ENCODE measurements at regions of chr5 and their contacts with region 1.

Region 1: DNA sequence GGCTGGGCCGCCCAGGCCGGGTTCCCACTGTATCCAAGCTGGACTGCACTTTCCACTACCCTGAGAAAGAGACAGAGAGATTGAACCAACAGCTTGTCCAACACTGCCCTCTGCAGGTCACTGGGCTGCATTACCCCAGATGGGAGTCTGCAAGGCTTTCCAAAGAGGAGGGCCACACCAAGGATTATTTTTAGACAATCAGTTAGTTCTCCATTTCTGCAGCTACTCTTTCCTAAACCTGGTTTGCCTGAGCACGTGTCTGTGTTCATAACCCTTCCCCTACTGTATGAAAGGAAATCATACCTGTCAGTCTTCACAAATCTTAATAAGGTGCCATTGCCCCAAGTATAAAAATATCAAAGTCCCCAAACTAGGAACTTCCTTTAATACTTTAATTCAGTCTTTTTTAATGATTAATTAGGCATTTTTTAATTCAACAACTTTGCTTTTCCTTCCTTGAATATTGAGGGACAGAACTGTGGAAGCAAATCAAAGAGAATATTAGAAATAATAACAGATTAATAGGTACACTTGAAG is 13.4 kb upstream of the FGF1 start:
- DNase-seq: peak; percentile 93
- H3K4me3 ChIP-seq: no peak overlapping the region
- H3K27ac ChIP-seq: peak overlapping the region in 3 of 4 donors; percentile 59 to 73 (median 72)
- H3K4me1 ChIP-seq: peaks cover 0 to 25% (median 19%) of the 10 kb centered on the region in 4 donors
- H3K27me3 ChIP-seq: no peaks in the 10 kb centered on the region
- CTCF ChIP-seq: peak; percentile 88 to 97 (median 92)
- EP300 ChIP-seq: no peak
- POLR2A ChIP-seq: no peak

Region 2: GRCh38 chr5:142151436-142152383 is 547.5 kb before region 1 on chr5:
- intact Hi-C with region 1: loop called (anchors 5 kb)
- DNase-seq: no peak
- H3K4me3 ChIP-seq: no peak overlapping the region
- H3K27ac ChIP-seq: no peak overlapping the region
- H3K4me1 ChIP-seq: peaks cover 0 to 4% (median 0%) of the 10 kb centered on the region in 4 donors
- H3K27me3 ChIP-seq: no peaks in the 10 kb centered on the region
- CTCF ChIP-seq: peak; percentile 46 to 78 (median 68)
- EP300 ChIP-seq: no peak
- POLR2A ChIP-seq: no peak

Region 3: DNA sequence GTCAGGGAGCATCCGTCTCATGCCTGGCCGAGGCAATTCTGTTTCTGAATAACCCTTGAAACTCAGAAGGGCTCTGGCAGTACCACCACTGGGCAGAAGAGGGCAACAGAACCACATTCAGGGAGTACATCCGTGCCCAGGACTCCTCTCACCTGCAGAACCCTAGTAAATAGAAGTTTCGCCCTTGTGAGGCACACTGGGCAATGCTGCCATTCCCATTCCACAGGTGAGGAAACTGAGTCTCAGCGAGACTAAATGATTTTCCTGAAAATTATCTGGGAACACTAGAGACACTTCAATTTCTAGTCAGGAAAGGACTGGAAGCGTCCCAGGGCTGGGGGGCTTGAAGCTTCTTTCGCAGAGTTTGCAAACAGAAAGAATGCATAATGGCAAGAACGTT is 88.1 kb before region 1 on chr5:
- intact Hi-C with region 1: loop called (anchors 1 kb)
- DNase-seq: peak; percentile 80
- H3K4me3 ChIP-seq: no peak overlapping the region
- H3K27ac ChIP-seq: no peak overlapping the region
- H3K4me1 ChIP-seq: peaks cover 0 to 12% (median 5%) of the 10 kb centered on the region in 4 donors
- H3K27me3 ChIP-seq: no peaks in the 10 kb centered on the region
- CTCF ChIP-seq: peak; percentile 84 to 93 (median 89)
- EP300 ChIP-seq: no peak
- POLR2A ChIP-seq: no peak

Region 4: DNA sequence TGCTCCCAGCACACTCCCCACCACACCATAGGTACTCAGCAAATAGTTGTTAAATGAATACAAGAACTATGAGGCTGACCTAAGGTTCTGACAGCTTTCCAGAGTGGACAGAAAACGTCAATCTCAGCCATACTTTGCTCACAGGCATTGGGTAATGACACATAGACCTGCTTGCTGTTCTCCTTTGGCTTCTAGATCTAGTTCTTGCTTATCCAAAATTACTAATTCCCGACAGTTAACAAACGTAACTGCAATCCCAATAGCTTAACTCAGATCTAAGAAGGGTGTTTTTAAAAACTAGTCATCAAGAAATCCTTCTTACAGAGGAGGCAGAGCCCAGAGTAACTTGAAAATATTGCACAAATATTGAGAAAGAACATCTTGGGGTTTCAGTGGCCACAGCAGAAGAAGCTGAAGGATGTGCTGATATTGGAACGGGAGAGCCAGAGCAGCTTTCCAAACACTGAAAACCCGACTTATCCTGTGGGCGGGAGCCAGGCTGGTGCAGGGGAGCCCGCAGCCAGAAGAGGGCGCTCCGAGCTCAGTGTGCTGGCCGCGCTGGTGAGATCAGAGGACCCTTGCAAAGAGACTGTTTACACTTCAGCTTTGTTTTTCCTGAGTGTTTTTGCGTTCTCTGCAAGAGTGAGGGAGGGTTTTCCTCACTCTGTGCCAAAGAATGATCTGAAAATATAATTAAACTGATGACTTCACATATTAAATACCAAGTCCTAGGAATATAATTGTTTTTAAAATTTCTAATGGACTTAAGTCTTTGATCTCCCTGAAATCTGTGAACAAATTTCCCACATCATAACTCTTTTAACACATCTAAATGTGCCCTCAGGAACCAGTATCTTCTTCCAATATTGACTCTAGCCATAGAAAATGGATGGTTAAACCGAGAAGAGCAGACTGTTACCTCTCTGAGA is 43.6 kb before region 1 on chr5:
- intact Hi-C with region 1: loop called (anchors 1 kb)
- DNase-seq: peak; percentile 94
- H3K4me3 ChIP-seq: no peak overlapping the region
- H3K27ac ChIP-seq: peak overlapping the region; percentile 3 to 53 (median 39)
- H3K4me1 ChIP-seq: peaks cover 0 to 13% (median 8%) of the 10 kb centered on the region in 4 donors
- H3K27me3 ChIP-seq: no peaks in the 10 kb centered on the region
- CTCF ChIP-seq: peak; percentile 74 to 99 (median 90)
- EP300 ChIP-seq: no peak
- POLR2A ChIP-seq: no peak

Region 5: DNA sequence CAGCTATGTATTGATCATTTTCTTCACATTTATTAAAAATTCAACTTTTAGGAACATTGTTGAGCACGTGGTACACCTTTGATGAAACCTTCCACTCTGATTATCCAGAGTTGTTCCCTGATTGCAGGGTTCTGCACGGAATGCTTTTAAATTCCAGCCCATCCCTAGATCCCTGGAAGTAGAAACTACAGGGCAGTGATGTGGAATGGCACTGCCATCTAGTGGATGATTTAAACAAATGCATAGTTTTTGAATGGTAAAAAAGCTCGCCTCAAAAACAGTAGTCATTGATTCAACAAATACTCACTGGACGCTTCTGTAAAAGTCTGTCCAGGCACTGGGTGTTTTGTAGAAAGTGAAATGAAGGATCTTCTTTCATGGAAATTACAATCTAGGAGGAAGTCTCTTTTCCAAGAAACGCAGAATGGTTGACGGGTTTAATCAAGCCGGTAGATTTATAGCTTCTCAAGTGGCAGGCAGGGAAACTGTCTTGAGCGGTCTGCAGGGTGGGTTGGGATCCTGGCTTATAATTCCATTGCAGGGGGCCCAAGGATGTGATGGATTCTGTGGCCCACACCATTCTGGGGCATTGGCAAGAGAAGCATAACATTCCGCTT is 189.3 kb after region 1 on chr5:
- intact Hi-C with region 1: no loop called
- DNase-seq: no peak
- H3K4me3 ChIP-seq: no peak overlapping the region
- H3K27ac ChIP-seq: no peak overlapping the region
- H3K4me1 ChIP-seq: peaks cover 0 to 5% (median under 1%) of the 10 kb centered on the region in 4 donors
- H3K27me3 ChIP-seq: no peaks in the 10 kb centered on the region
- CTCF ChIP-seq: peak; percentile 30 to 75 (median 64)
- EP300 ChIP-seq: no peak
- POLR2A ChIP-seq: no peak